Endothelial cell of umbilical vein (primary cell): ENCODE measurements at regions of chr2 and their contacts with region 1.

Region 1: DNA sequence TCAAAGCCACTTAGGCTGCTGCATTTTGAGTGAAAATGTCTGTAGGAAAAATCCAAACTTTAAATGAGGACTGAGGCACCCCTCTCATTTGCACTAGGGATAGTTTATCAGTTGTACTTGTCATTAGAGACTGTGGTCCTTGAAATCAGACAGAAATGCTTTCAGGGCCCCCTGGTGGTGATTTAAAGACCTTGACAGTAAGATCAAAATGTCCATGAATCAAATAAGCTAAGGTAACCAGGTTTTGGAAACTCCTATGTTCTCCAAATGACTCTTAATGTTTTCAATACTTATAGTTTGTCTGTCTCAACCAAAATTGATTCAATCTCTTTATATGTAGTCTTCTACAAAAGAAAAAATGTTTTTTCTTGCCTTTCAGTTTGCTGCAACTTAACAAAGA is 28.8 kb upstream of the DDX18 start:
- DNase-seq: peak; percentile 37
- H3K4me3 ChIP-seq: no peak overlapping the region
- H3K27ac ChIP-seq: no peak overlapping the region
- H3K4me1 ChIP-seq: no peaks in the 10 kb centered on the region
- H3K27me3 ChIP-seq: no peaks in the 10 kb centered on the region
- CTCF ChIP-seq: peak; percentile 29 to 47
- POLR2A ChIP-seq: no peak

Region 2: GRCh38 chr2:116747103-116747502 is 1038.6 kb before region 1 on chr2:
- CTCF ChIA-PET with region 1: no interaction called
- POLR2A ChIA-PET with region 1: no interaction called
- dilution Hi-C with region 1: no loop called
- intact Hi-C with region 1: loop called (anchors 10 kb)
- DNase-seq: no peak
- H3K4me3 ChIP-seq: no peak overlapping the region
- H3K27ac ChIP-seq: no peak overlapping the region
- H3K4me1 ChIP-seq: no peaks in the 10 kb centered on the region
- H3K27me3 ChIP-seq: no peaks in the 10 kb centered on the region
- CTCF ChIP-seq: no peak
- POLR2A ChIP-seq: no peak

Region 3: GRCh38 chr2:117555965-117556364 is 229.8 kb before region 1 on chr2:
- CTCF ChIA-PET with region 1: no interaction called
- POLR2A ChIA-PET with region 1: no interaction called
- dilution Hi-C with region 1: no loop called
- intact Hi-C with region 1: no loop called
- DNase-seq: no peak
- H3K4me3 ChIP-seq: no peak overlapping the region
- H3K27ac ChIP-seq: no peak overlapping the region
- H3K4me1 ChIP-seq: no peaks in the 10 kb centered on the region
- H3K27me3 ChIP-seq: no peaks in the 10 kb centered on the region
- CTCF ChIP-seq: no peak
- POLR2A ChIP-seq: no peak

Region 4: GRCh38 chr2:117614296-117614695 is 171.4 kb before region 1 on chr2:
- CTCF ChIA-PET with region 1: no interaction called
- POLR2A ChIA-PET with region 1: no interaction called
- dilution Hi-C with region 1: no loop called
- intact Hi-C with region 1: no loop called
- DNase-seq: no peak
- H3K4me3 ChIP-seq: no peak overlapping the region
- H3K27ac ChIP-seq: no peak overlapping the region
- H3K4me1 ChIP-seq: no peaks in the 10 kb centered on the region
- H3K27me3 ChIP-seq: no peaks in the 10 kb centered on the region
- CTCF ChIP-seq: no peak
- POLR2A ChIP-seq: no peak